ENCODE measurements at regions of chr7 and their contacts with region 1.

Region 1: DNA sequence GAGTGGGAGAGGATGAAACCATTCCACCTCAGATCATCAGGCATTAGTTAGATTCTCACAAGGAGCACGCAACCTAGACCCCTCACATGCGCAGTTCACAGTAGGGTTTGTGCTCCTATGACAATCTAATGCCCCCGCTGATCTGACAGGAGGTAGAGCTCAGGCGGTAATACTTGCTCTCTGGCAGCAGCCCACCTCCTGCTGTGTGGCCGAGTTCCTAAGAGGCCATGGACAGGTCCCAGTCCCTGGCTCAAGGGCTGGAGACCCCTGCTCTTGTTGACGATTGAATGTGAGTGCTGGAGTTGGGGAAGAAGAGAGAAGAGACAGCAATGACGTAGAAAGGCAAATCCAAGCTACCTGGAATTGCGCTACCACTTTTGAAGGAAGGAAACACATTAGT is 267.2 kb downstream of the TFEC start:
- DNase-seq: no peak
- H3K4me3 Mint-ChIP-seq: no peak overlapping the region
- H3K27ac Mint-ChIP-seq: no peak overlapping the region
- H3K4me1 Mint-ChIP-seq: no peaks in the 10 kb centered on the region
- H3K27me3 Mint-ChIP-seq: no peaks in the 10 kb centered on the region
- CTCF ChIP-seq: no peak

Region 2: DNA sequence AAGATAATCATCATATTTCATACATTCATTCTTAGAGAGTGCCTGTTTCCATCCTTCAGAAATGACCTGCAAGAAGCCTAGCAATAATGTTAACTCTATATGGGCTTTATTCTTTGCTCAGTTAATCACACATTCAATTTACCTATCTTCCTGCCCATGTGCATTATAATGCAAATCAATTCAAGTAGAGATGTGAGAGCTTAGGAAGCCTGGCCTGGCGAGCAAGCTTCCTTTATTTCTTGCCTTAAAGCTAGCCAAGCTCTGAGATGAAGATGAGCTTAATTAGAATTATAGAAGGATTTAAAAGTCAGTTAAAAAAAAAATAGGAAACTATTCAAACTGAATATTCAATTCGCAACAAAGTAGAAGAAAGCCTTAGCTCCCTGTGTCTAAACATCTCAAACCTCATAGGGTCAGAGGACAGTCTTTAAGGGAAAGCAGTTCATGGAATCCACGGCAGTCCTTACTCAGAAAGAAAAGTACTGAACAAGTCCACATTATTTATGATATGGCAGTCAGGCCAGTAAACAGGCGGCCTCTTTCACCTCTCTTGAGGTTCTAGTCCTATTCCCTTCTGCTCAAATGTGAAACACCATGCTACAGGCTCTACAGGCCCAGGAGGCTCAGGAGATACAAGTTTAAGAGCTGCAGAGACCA is 53.1 kb after region 1 on chr7:
- CTCF ChIA-PET with region 1: no interaction called
- intact Hi-C with region 1: loop called (anchors 2 kb)
- DNase-seq: no peak
- H3K4me3 Mint-ChIP-seq: no peak overlapping the region
- H3K27ac Mint-ChIP-seq: no peak overlapping the region
- H3K4me1 Mint-ChIP-seq: no peaks in the 10 kb centered on the region
- H3K27me3 Mint-ChIP-seq: no peaks in the 10 kb centered on the region
- CTCF ChIP-seq: no peak

Region 3: GRCh38 chr7:116211006-116211912 is 447.9 kb after region 1 on chr7:
- CTCF ChIA-PET with region 1: no interaction called
- intact Hi-C with region 1: no loop called
- DNase-seq: peak; percentile 90
- H3K4me3 Mint-ChIP-seq: peak overlapping the region; percentile 98
- H3K27ac Mint-ChIP-seq: peak overlapping the region; percentile 99
- H3K4me1 Mint-ChIP-seq: peaks cover 40% of the 10 kb centered on the region
- H3K27me3 Mint-ChIP-seq: no peaks in the 10 kb centered on the region
- CTCF ChIP-seq: no peak